MCF 10A (cell line): ENCODE measurements at regions of chr9 and their contacts with region 1.

Region 1: DNA sequence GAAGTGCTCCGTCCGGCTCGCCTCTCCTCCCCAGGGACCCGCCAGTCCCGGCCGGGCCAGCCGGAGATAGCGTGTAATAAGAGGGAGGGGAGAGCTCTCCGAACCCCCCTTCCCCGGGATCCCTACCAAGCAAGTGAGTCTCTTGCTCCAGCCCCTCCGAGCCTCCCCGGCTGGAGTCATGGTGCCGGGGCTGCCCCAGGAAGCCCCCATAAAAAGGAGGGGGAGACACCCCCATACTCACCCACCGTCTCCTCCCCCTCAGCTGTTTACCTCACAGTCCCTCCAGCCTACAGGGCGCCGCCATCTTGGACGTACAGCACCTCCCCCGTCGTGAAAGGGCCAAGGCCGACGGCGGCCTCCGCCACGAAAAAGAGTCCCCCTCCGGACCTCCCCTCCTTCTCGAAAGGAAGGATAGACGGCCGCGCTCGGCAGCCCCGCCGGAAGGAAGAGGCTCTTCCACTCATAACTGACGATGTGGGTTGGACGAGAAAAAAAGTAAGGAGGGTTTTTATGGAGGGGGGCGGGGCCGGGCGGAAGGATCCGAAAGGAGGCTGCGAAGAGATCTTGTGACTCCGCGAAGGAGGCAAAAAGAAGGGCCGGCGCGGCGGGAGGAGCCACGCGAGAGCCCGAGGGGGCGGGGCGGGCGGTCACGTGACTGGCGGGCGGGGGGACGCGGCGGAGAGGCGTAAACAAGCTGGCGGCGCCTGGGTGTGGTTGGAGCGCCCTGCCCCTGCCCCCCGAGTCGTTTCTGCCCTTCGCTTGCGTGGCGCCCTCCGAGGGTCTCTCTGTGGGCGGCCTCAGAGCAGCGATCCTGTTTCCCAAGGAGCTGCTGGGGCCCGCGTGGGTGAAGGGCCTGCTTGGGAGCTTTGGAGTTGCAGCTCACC is at the start of gene TSC1:
- DNase-seq: peak; percentile 93
- H3K4me3 Mint-ChIP-seq: peak within 1 kb of the TSS; percentile 94
- H3K27ac Mint-ChIP-seq: peak within 1 kb of the TSS; percentile 100
- H3K4me1 Mint-ChIP-seq: peaks cover 25% of the 10 kb centered on the region
- H3K27me3 Mint-ChIP-seq: no peaks in the 10 kb centered on the region
- CTCF ChIP-seq: no peak
- total RNA-seq, gene TSC1: 36.6 and 48.5 TPM in 2 replicates

Region 2: GRCh38 chr9:132877824-132878694 is 66.5 kb before region 1 on chr9 and contains the start of gene AK8:
- CTCF ChIA-PET with region 1: no interaction called
- POLR2A ChIA-PET with region 1: interaction called, 15 read pairs
- intact Hi-C with region 1: no loop called
- DNase-seq: peak; percentile 62
- H3K4me3 Mint-ChIP-seq: peak within 1 kb of the TSS; percentile 72
- H3K27ac Mint-ChIP-seq: peak within 1 kb of the TSS; percentile 89
- H3K4me1 Mint-ChIP-seq: peaks cover 4% of the 10 kb centered on the region
- H3K27me3 Mint-ChIP-seq: no peaks in the 10 kb centered on the region
- CTCF ChIP-seq: no peak
- total RNA-seq, gene AK8: 0.42 and 1.1 TPM in 2 replicates

Region 3: DNA sequence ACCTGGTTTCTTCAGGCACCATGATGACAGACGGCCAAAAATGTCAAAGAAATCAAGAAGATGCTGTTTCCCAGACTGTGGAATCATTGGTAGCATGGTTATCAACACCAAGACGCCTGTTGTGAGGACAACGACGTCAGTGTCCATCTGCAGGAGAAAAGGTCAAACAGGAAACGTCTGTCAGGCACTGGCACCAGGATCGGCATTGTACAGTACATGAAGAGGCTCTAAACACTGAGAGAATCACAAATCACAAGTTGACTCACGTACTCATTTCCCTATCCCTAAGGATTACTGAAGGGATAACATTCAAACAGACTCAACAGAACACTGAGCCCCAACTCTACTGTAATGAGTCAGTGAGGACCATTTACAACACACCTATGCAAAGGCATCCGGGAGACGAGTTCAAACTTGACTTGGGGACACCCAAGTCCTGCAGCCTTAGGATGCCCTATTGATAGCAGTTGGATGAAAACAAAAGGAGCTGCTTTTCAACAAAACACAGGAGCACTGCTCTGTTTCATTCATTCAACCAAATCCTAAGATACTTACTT is 21.1 kb before region 1 on chr9:
- CTCF ChIA-PET with region 1: no interaction called
- POLR2A ChIA-PET with region 1: interaction called, 15 read pairs
- intact Hi-C with region 1: no loop called
- DNase-seq: peak; percentile 60
- H3K4me3 Mint-ChIP-seq: no peak overlapping the region
- H3K27ac Mint-ChIP-seq: no peak overlapping the region
- H3K4me1 Mint-ChIP-seq: no peaks in the 10 kb centered on the region
- H3K27me3 Mint-ChIP-seq: no peaks in the 10 kb centered on the region
- CTCF ChIP-seq: no peak

Region 4: GRCh38 chr9:132931178-132931735 is 13.3 kb before region 1 on chr9:
- CTCF ChIA-PET with region 1: no interaction called
- POLR2A ChIA-PET with region 1: interaction called, 25 read pairs
- intact Hi-C with region 1: no loop called
- DNase-seq: no peak
- H3K4me3 Mint-ChIP-seq: no peak overlapping the region
- H3K27ac Mint-ChIP-seq: no peak overlapping the region
- H3K4me1 Mint-ChIP-seq: no peaks in the 10 kb centered on the region
- H3K27me3 Mint-ChIP-seq: no peaks in the 10 kb centered on the region
- CTCF ChIP-seq: no peak

Region 5: DNA sequence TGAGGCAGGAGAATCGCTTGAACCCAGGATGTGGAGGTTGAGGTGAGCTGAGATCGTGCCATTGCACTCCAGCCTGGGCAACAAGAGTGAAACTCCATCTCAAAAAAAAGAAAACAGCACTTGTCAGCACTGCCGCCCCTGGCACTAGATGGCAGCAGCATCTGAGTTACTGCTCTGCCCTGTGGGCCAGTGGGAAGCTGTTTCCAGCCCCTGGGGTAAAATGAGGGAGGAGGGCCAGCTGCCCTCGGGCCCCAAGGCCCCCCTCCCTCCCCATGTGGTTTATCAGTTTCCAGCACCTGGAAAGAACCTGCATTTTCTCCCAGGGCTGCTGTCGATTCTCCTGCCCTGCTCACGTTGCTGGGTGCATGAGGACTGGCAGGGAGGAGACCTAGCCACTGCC is 104.0 kb after region 1 on chr9:
- CTCF ChIA-PET with region 1: no interaction called
- POLR2A ChIA-PET with region 1: no interaction called
- intact Hi-C with region 1: no loop called
- DNase-seq: no peak
- H3K4me3 Mint-ChIP-seq: no peak overlapping the region
- H3K27ac Mint-ChIP-seq: no peak overlapping the region
- H3K4me1 Mint-ChIP-seq: no peaks in the 10 kb centered on the region
- H3K27me3 Mint-ChIP-seq: no peaks in the 10 kb centered on the region
- CTCF ChIP-seq: peak; percentile 36

Region 6: GRCh38 chr9:133075925-133076630 is 131.5 kb after region 1 on chr9:
- CTCF ChIA-PET with region 1: no interaction called
- POLR2A ChIA-PET with region 1: no interaction called
- intact Hi-C with region 1: no loop called
- DNase-seq: peak; percentile 20
- H3K4me3 Mint-ChIP-seq: no peak overlapping the region
- H3K27ac Mint-ChIP-seq: no peak overlapping the region
- H3K4me1 Mint-ChIP-seq: peaks cover 10% of the 10 kb centered on the region
- H3K27me3 Mint-ChIP-seq: peaks cover 14% of the 10 kb centered on the region
- CTCF ChIP-seq: no peak